Activated CD4-positive, alpha-beta memory T cell treated with anti-CD3 and anti-CD28 coated beads for 36 hours (primary cell): ENCODE measurements at regions of chr2 and their contacts with region 1.

Region 1: DNA sequence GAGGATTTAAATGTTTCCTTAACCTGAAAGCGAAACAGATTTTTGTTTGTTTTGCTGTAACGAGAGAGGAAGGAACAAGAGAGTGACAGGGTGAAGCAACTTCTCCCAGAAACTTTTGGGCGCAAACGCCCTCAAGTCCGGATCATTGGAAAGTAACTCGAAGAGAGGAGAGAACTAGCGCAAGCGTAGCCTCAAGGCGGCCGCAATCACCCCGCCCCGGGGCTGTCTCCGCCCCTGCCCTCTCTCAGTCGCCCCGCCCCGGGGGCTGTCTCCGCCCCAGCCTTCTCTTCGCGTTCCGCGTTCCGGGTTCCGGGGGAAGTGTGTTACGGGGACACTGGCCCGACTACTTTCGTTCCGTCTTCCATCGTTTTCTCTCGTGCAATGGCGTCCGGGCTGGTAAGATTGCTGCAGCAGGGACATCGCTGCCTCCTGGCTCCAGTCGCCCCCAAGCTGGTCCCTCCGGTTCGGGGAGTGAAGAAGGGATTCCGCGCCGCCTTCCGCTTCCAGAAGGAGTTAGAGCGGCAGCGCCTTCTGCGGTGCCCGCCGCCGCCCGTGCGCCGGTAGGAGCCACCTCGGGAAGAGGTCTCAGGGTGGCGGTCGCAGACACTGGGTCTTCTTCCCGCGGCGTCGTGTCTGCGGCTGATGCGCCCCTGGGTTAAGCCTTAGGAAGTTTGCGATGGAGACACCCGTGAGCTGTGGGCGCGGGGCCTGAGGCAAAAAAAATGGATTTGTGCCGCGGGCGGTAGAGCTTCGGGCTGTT is at the start of gene MRPL44:
- DNase-seq: peak; percentile 98
- H3K4me3 Mint-ChIP-seq: peak within 1 kb of the TSS; percentile 92
- H3K27ac Mint-ChIP-seq: peak within 1 kb of the TSS; percentile 88
- H3K4me1 Mint-ChIP-seq: peaks cover 65% of the 10 kb centered on the region
- H3K27me3 Mint-ChIP-seq: no peaks in the 10 kb centered on the region
- total RNA-seq, gene MRPL44: 39.4 to 41.6 TPM

Region 2: DNA sequence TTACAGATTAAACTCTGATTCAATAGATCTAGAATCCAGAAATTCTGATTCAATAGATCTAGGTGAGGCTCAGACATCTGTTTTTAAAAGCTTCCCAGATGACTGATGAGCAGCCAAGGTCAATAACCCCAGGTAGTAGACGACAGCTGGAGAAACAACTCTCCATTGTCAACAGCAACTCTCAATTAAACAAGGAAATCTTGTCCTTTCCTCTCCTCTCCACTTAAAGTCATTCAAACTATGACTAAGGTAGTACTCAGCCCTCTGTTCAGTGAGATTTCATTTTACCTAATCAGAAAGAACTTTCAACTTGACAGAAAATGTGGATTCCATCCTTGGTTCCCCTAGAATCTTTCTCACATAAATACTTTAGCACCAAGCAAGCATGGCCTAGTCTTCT is 260.6 kb before region 1 on chr2:
- CTCF ChIA-PET with region 1: no interaction called
- POLR2A ChIA-PET with region 1: no interaction called
- intact Hi-C with region 1: loop called (anchors 5 kb)
- DNase-seq: no peak
- H3K4me3 Mint-ChIP-seq: no peak overlapping the region
- H3K27ac Mint-ChIP-seq: no peak overlapping the region
- H3K4me1 Mint-ChIP-seq: peaks cover 10% of the 10 kb centered on the region
- H3K27me3 Mint-ChIP-seq: peaks cover 2% of the 10 kb centered on the region

Region 3: GRCh38 chr2:223760838-223761502 is 196.3 kb before region 1 on chr2:
- CTCF ChIA-PET with region 1: interaction called, 3 read pairs
- POLR2A ChIA-PET with region 1: no interaction called
- intact Hi-C with region 1: loop called (anchors 2 kb)
- DNase-seq: peak; percentile 78
- H3K4me3 Mint-ChIP-seq: no peak overlapping the region
- H3K27ac Mint-ChIP-seq: peak overlapping the region; percentile 65
- H3K4me1 Mint-ChIP-seq: peaks cover 24% of the 10 kb centered on the region
- H3K27me3 Mint-ChIP-seq: no peaks in the 10 kb centered on the region

Region 4: DNA sequence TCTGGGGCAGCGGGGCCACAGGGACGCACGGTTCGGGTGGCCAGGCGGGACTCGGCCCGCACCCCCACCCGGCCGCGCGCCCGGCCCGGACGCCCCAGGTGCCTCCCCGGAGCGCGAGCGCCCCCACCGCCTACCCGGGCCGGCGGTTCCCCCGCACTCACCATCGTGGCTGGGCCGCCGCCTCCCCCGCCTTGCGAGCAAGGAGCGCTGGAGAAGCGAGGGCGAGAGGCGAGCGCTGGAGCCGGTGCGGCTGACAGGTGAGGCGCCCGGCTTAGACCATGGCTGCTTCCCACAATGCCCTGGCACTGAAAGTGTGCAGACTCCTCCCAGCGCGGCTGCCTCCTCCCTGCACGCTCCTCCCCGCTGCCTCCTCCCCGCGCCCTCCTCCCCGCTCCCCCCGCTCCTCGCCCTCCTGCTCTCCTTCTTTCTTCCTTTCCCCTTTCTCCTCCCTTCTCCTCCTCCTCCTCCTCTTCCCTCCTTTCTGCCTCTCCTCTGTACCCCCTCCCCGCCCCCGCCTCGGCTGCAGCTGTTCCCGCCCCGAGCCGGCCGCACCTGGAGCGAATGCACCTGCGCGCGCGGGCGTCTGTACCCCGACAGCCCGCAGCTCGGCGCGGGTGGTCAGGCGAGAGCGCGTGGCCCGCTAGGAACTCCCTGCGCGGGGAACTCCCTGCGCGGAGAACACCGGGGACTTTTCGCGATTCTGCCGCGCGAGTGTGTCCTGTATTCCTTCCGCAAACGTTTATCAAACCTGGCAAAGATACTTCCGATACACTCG is 119.8 kb before region 1 on chr2 and contains the start of gene AP1S3:
- CTCF ChIA-PET with region 1: interaction called, 3 read pairs
- POLR2A ChIA-PET with region 1: no interaction called
- intact Hi-C with region 1: loop called (anchors 2 kb)
- DNase-seq: peak; percentile 83
- H3K4me3 Mint-ChIP-seq: peak within 1 kb of the TSS; percentile 94
- H3K27ac Mint-ChIP-seq: no peak within 1 kb of the TSS
- H3K4me1 Mint-ChIP-seq: peaks cover 11% of the 10 kb centered on the region
- H3K27me3 Mint-ChIP-seq: no peaks in the 10 kb centered on the region
- total RNA-seq, gene AP1S3: 10.1 to 12.1 TPM

Region 5: GRCh38 chr2:223944703-223945531 is 12.4 kb before region 1 on chr2 and contains the start of gene WDFY1:
- CTCF ChIA-PET with region 1: interaction called, 6 read pairs
- POLR2A ChIA-PET with region 1: interaction called, 17 read pairs
- intact Hi-C with region 1: loop called (anchors 1 kb)
- DNase-seq: peak; percentile 88
- H3K4me3 Mint-ChIP-seq: peak within 1 kb of the TSS; percentile 91
- H3K27ac Mint-ChIP-seq: peak within 1 kb of the TSS; percentile 91
- H3K4me1 Mint-ChIP-seq: peaks cover 54% of the 10 kb centered on the region
- H3K27me3 Mint-ChIP-seq: no peaks in the 10 kb centered on the region
- total RNA-seq, gene WDFY1: 48.7 to 50.1 TPM

Region 6: DNA sequence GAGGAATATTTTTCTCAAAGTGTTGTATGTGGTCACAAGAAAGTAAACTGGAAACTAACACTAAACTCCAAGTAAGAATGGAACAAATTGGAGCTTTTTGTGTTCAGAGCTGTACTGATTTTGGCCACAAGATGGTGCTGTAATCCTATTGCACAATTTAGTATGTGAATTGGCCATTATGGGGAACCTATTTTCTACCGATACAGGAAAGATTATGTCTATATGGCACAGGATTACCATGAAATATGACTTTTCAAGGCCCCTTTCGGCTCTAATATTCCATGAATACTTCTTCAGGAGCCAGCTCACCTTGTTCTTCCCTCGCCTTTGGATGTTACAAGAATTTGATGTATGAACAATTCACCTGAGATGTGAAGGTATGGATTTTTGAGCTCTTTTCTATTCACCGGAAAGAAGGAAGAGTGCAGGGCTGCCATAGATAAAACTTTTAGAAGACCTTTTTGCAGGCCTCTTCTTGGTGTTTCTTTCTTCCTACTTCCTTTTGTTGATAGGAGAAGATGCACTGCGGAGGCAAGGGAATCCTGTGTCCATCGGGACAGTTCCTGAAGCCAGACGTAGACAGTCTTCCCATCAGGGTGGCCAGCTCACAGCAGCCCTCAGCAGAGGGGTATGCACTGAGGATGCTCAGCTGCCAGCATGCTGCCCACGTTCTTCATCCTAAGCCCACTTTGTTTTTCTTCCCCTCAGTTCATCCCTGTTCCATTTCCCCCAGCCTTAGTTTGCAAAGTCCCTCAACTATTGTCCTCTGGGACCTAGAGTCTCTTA is 13.3 kb after region 1 on chr2:
- CTCF ChIA-PET with region 1: interaction called, 45 read pairs
- POLR2A ChIA-PET with region 1: interaction called, 4 read pairs
- intact Hi-C with region 1: no loop called
- DNase-seq: peak; percentile 42
- H3K4me3 Mint-ChIP-seq: no peak overlapping the region
- H3K27ac Mint-ChIP-seq: no peak overlapping the region
- H3K4me1 Mint-ChIP-seq: peaks cover 12% of the 10 kb centered on the region
- H3K27me3 Mint-ChIP-seq: no peaks in the 10 kb centered on the region

Region 7: GRCh38 chr2:223980803-223981202 is 23.5 kb after region 1 on chr2:
- CTCF ChIA-PET with region 1: no interaction called
- POLR2A ChIA-PET with region 1: no interaction called
- intact Hi-C with region 1: no loop called
- DNase-seq: no peak
- H3K4me3 Mint-ChIP-seq: no peak overlapping the region
- H3K27ac Mint-ChIP-seq: no peak overlapping the region
- H3K4me1 Mint-ChIP-seq: no peaks in the 10 kb centered on the region
- H3K27me3 Mint-ChIP-seq: peaks cover 3% of the 10 kb centered on the region

Region 8: DNA sequence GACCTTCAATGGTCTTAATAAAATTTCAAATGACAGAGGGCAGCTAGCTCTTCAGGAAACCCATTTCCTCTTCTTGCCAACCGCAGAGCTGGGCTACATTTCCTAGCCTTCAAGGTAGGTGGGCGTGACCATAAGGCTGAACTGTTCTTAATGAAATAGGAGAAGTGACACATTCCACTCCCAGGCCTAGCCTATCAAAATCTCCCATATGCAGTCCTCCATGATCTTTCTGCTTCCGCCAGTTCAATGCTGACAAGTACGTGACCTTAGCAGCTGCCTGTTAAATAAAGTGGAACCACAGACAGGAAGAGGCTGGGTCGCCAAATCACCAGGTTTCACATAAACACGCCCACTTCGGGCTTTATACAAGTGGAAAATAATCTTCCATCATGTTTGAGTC is 68.6 kb after region 1 on chr2:
- CTCF ChIA-PET with region 1: no interaction called
- POLR2A ChIA-PET with region 1: no interaction called
- intact Hi-C with region 1: loop called (anchors 1 kb)
- DNase-seq: peak; percentile 77
- H3K4me3 Mint-ChIP-seq: peak overlapping the region; percentile 30
- H3K27ac Mint-ChIP-seq: peak overlapping the region; percentile 85
- H3K4me1 Mint-ChIP-seq: peaks cover 48% of the 10 kb centered on the region
- H3K27me3 Mint-ChIP-seq: no peaks in the 10 kb centered on the region